Common myeloid progenitor, CD34-positive (primary cell): ENCODE measurements at regions of chr6 and their contacts with region 1.

Region 1: DNA sequence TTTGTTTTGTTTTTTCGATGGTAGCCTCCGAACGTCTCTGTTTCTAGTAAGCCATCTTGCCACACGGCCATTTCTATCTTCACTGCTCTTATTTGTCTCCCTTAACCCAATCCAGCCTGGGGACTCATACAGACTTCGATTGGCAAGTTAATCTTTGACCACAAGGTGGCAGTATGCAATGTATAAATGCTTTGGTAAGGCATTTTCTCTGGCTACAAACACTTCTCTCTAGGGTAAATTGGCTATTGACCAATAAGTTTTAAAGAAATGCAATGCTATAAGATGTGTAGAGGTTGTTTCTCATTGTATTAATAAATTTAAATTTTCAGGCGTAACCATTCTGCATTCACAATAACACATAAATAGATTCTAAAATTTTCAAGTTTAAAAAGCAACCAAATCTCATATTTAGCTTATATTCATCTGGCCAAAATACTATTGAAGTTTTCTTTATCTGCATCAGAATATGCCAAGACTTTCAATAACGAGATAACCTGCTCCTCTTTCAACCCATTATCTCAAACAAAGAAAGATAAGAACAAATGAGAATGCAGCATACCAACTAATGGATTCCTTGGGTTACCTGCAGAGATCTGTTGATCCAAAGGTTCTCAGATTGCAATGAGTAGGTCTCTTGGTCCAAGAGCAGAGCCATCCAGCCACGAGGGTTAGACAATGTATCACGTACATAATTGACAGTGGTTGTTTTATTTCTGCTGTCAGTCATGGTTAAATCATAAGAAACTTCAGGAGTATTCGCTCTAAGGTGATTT is 231.9 kb downstream of the PKHD1 start:
- DNase-seq: peak; percentile 71 to 85 (median 75)
- H3K4me3 ChIP-seq: no peak overlapping the region
- H3K27ac ChIP-seq: no peak overlapping the region
- H3K4me1 ChIP-seq: no peaks in the 10 kb centered on the region
- H3K27me3 ChIP-seq: peaks cover 0 to 3% (median 0%) of the 10 kb centered on the region in 5 experiments

Region 2: GRCh38 chr6:51959744-51960383 is 104.4 kb after region 1 on chr6:
- CTCF ChIA-PET with region 1: interaction called, 23 read pairs
- POLR2A ChIA-PET with region 1: no interaction called
- DNase-seq: peak; percentile 56 to 78 (median 71)
- H3K4me3 ChIP-seq: no peak overlapping the region
- H3K27ac ChIP-seq: no peak overlapping the region
- H3K4me1 ChIP-seq: no peaks in the 10 kb centered on the region
- H3K27me3 ChIP-seq: peaks cover 5 to 12% (median 6%) of the 10 kb centered on the region in 5 experiments